Endothelial cell of umbilical vein (primary cell): ENCODE measurements at regions of chr6 and their contacts with region 1.

Region 1: GRCh38 chr6:108896111-108896661 is 48.0 kb downstream of the ARMC2 start:
- DNase-seq: peak; percentile 81
- H3K4me3 ChIP-seq: no peak overlapping the region
- H3K27ac ChIP-seq: peak overlapping the region; percentile 96
- H3K4me1 ChIP-seq: peaks cover 22% of the 10 kb centered on the region
- H3K27me3 ChIP-seq: no peaks in the 10 kb centered on the region
- CTCF ChIP-seq: no peak
- POLR2A ChIP-seq: no peak

Region 2: GRCh38 chr6:108558372-108559096 is 337.7 kb before region 1 on chr6:
- CTCF ChIA-PET with region 1: interaction called, 21 read pairs
- POLR2A ChIA-PET with region 1: no interaction called
- dilution Hi-C with region 1: no loop called
- intact Hi-C with region 1: loop called (anchors 1 kb)
- DNase-seq: peak; percentile 99
- H3K4me3 ChIP-seq: peak overlapping the region; percentile 89 to 94 (median 92)
- H3K27ac ChIP-seq: peak overlapping the region; percentile 93
- H3K4me1 ChIP-seq: peaks cover 22% of the 10 kb centered on the region
- H3K27me3 ChIP-seq: peaks cover 3 to 4% of the 10 kb centered on the region in 2 experiments
- CTCF ChIP-seq: no peak
- POLR2A ChIP-seq: no peak

Region 3: DNA sequence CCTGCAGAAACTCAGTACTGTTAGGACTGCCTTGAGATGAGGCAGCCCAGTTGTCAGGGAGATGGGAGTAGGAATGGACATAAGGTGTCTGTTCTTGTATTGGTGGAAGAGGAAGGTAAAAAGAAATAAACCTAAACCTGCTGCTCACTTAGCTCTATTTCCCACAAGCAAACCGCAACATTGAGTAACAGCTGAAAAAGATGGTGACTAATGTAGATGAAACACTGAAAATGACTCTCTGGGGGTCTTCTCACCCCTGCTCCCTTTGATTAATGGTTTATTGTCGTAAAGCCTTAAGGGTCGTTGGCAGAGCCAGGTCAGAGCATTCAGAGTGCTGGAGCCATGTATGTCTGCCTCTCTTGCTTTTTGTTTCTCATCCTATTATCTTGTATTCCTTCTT is 248.0 kb before region 1 on chr6:
- CTCF ChIA-PET with region 1: no interaction called
- POLR2A ChIA-PET with region 1: no interaction called
- dilution Hi-C with region 1: no loop called
- intact Hi-C with region 1: no loop called
- DNase-seq: no peak
- H3K4me3 ChIP-seq: no peak overlapping the region
- H3K27ac ChIP-seq: no peak overlapping the region
- H3K4me1 ChIP-seq: no peaks in the 10 kb centered on the region
- H3K27me3 ChIP-seq: no peaks in the 10 kb centered on the region
- CTCF ChIP-seq: no peak
- POLR2A ChIP-seq: no peak

Region 4: GRCh38 chr6:108699290-108700041 is 196.7 kb before region 1 on chr6:
- CTCF ChIA-PET with region 1: no interaction called
- POLR2A ChIA-PET with region 1: no interaction called
- dilution Hi-C with region 1: no loop called
- intact Hi-C with region 1: no loop called
- DNase-seq: no peak
- H3K4me3 ChIP-seq: no peak overlapping the region
- H3K27ac ChIP-seq: no peak overlapping the region
- H3K4me1 ChIP-seq: no peaks in the 10 kb centered on the region
- H3K27me3 ChIP-seq: no peaks in the 10 kb centered on the region
- CTCF ChIP-seq: no peak
- POLR2A ChIP-seq: no peak

Region 5: DNA sequence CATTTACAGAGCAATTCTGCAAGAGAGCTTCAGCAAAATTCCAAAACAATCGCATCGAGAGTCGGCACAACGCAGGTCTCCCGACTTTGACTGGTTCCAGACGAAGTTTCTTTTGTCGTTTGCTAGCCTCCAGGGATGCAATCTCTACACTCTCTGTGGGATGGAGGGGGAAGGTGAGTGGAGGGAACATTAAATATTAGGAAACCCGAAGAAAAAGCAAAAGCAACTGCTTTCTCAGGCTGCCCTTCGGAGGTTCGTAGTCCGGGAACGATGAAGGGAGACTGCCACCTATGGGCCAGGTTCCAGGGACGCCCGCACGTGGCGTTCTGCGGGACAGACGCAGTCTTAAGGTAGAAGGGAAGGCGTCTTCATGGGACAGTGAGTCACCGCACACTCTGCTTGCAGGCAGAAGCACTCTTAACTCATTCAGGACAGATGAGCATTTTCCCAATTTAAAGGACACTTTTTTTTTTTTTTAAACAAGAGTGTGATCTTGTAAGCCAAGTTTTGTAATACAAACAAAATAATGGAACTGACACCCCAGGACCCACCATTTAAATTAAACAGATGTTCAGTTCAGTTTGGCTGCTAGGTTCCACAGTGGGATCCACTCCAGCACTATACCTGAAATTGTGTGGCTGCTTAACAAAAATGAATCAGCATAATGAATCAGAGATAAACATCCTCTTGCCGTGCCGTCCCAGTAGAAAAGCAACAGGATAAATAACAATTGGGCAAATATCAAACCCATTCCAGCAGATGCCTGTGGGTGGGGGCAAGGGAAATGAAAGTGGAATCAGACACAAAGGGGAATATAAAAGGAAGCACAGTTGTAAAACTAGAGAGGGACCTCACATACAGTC is 113.8 kb before region 1 on chr6:
- CTCF ChIA-PET with region 1: interaction called, 5 read pairs
- POLR2A ChIA-PET with region 1: no interaction called
- dilution Hi-C with region 1: no loop called
- intact Hi-C with region 1: loop called (anchors 2 kb)
- DNase-seq: peak; percentile 88
- H3K4me3 ChIP-seq: peak overlapping the region; percentile 56 to 79 (median 60)
- H3K27ac ChIP-seq: no peak overlapping the region
- H3K4me1 ChIP-seq: peaks cover 18% of the 10 kb centered on the region
- H3K27me3 ChIP-seq: no peaks in the 10 kb centered on the region
- CTCF ChIP-seq: peak; percentile 72 to 85
- POLR2A ChIP-seq: no peak

Region 6: GRCh38 chr6:108874470-108875160 is 21.6 kb before region 1 on chr6:
- CTCF ChIA-PET with region 1: interaction called, 11 read pairs
- POLR2A ChIA-PET with region 1: no interaction called
- dilution Hi-C with region 1: no loop called
- intact Hi-C with region 1: no loop called
- DNase-seq: peak; percentile 49
- H3K4me3 ChIP-seq: no peak overlapping the region
- H3K27ac ChIP-seq: no peak overlapping the region
- H3K4me1 ChIP-seq: no peaks in the 10 kb centered on the region
- H3K27me3 ChIP-seq: no peaks in the 10 kb centered on the region
- CTCF ChIP-seq: no peak
- POLR2A ChIP-seq: no peak

Region 7: DNA sequence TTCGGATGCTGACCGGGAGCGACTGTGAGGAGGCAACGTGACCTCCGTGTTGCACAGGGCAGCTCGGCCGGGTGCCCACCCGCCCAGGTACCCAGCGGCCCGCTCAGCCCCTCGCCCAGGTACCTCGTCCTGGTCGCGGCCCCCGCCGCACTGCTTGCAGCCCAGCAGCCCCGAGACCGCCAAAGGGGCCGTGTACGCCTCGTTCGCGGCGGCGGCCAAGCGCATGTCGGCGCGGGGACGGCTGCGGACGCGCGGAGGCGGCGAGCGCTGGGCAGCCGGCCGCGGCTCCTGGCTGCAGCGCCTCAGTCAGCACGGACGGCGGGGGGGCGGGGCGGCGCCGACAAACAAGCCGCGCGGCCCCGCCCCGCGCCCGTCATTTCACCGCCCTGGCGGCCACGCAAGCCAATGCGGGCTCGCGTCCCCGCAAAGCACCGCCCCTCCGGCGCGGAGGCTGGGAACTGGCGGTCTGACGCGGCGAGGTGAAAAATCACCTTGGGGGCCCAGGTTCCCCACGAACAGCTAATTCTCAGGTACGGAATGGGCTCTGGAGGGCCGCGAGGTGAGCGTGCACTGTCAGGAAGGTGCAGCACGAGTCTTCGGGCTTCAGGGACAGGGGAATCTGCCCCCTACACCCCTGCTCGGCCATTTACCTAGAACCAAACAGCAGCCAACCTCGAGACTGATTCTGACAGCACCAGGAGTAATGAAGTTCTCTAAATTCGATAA is 113.2 kb after region 1 on chr6:
- CTCF ChIA-PET with region 1: interaction called, 8 read pairs
- POLR2A ChIA-PET with region 1: no interaction called
- dilution Hi-C with region 1: no loop called
- intact Hi-C with region 1: loop called (anchors 5 kb)
- DNase-seq: peak; percentile 86
- H3K4me3 ChIP-seq: peak overlapping the region; percentile 63 to 95 (median 92)
- H3K27ac ChIP-seq: peak overlapping the region; percentile 41
- H3K4me1 ChIP-seq: peaks cover 6% of the 10 kb centered on the region
- H3K27me3 ChIP-seq: no peaks in the 10 kb centered on the region
- CTCF ChIP-seq: no peak
- POLR2A ChIP-seq: peak; percentile 75

Region 8: DNA sequence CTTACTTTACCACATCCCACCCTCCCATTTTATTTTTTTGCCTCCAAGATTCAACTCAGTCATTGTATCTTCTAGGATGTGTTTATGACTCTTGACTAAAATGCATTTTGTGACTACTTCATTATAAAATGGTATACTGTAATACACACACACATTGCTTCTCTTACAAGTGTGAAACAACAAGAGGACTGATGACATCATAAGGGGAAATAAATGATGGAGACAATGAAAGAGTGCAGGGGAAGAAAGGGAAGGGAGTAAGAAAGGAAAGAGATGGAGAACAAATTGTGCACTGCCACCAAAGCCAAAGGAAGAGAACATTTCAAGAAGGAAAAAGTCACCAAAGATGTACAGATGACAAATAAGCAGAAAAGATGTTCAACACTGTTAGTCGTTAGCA is 383.4 kb after region 1 on chr6:
- CTCF ChIA-PET with region 1: no interaction called
- POLR2A ChIA-PET with region 1: no interaction called
- dilution Hi-C with region 1: no loop called
- intact Hi-C with region 1: no loop called
- DNase-seq: no peak
- H3K4me3 ChIP-seq: no peak overlapping the region
- H3K27ac ChIP-seq: no peak overlapping the region
- H3K4me1 ChIP-seq: no peaks in the 10 kb centered on the region
- H3K27me3 ChIP-seq: peaks cover 2 to 12% of the 10 kb centered on the region in 2 experiments
- CTCF ChIP-seq: no peak
- POLR2A ChIP-seq: no peak